ENCODE measurements at regions of chr10 and their contacts with region 1.

Region 1: GRCh38 chr10:43888586-43888985 is 239.9 kb upstream of the ZNF32 start:
- DNase-seq: peak; percentile 24
- H3K4me3 ChIP-seq: no peak overlapping the region
- H3K27ac ChIP-seq: no peak overlapping the region
- H3K4me1 ChIP-seq: no peaks in the 10 kb centered on the region
- H3K27me3 ChIP-seq: no peaks in the 10 kb centered on the region
- CTCF ChIP-seq: no peak

Region 2: GRCh38 chr10:43965033-43965917 is 76.7 kb after region 1 on chr10:
- CTCF ChIA-PET with region 1: no interaction called
- dilution Hi-C with region 1: loop called (anchors 5 kb)
- in situ Hi-C with region 1: no loop called
- intact Hi-C with region 1: no loop called
- DNase-seq: no peak
- H3K4me3 ChIP-seq: no peak overlapping the region
- H3K27ac ChIP-seq: no peak overlapping the region
- H3K4me1 ChIP-seq: no peaks in the 10 kb centered on the region
- H3K27me3 ChIP-seq: no peaks in the 10 kb centered on the region
- CTCF ChIP-seq: no peak